ENCODE measurements at regions of chr7 and their contacts with region 1.

Region 1: DNA sequence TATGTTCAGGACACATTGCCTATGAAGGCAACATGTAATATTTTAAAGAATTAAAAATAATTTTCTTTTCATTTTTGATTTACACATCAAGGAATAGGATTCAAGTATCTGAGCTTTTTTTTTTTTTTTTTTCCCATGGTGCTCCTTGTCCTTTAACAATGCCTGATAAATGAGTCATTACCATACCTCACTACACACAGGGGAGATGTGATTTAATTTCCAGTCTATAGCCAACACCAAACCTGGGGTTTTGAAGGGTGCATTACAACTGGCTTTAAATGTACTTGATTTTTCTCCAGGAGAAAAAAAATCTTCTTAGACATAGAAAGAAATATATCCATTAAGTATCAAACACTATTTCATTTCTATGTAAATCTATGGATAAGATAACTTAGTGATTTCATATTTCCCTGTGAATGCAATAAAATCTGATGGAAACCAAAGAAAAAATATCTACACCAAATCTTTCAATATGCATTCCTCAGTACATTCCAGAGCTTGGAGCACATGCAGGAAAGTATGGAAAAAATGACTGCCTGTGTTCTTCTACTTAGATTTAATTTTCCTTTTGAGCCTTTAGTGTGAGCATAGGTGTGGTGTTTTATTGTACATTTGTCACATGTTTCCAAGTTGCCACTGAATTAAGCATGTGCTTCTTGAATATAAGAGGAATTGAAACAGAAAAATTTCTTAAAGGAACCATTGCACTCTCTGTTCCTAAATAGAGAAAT is 204.8 kb upstream of the MEOX2 start:
- DNase-seq: peak; percentile 26
- ATAC-seq: peak; percentile 63
- H3K4me3 ChIP-seq: no peak overlapping the region
- H3K27ac ChIP-seq: no peak overlapping the region
- H3K4me1 ChIP-seq: no peaks in the 10 kb centered on the region
- H3K27me3 ChIP-seq: no peaks in the 10 kb centered on the region
- CTCF ChIP-seq: no peak

Region 2: DNA sequence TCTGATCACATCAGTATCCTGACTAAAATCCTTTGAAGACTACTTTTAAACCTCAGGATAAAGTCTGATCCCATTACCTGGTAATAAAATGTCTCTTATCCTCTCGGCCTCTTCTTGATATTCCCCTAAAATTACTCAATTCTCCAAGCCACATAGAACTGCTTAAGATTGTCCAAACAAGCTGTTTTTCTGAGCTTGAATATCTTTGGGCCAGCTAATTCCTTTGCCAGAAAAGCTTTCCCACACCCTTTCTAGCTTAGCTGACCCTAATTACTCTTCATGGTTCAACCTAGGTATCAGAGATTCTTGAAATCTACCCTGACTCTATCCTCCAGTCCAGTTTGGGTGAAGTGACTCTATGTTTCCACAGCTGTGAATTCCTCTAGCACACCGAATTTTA is 201.4 kb after region 1 on chr7:
- CTCF ChIA-PET with region 1: no interaction called
- POLR2A ChIA-PET with region 1: interaction called, 16 read pairs
- intact Hi-C with region 1: no loop called
- DNase-seq: no peak
- ATAC-seq: no peak
- H3K4me3 ChIP-seq: no peak overlapping the region
- H3K27ac ChIP-seq: no peak overlapping the region
- H3K4me1 ChIP-seq: no peaks in the 10 kb centered on the region
- H3K27me3 ChIP-seq: no peaks in the 10 kb centered on the region
- CTCF ChIP-seq: no peak

Region 3: DNA sequence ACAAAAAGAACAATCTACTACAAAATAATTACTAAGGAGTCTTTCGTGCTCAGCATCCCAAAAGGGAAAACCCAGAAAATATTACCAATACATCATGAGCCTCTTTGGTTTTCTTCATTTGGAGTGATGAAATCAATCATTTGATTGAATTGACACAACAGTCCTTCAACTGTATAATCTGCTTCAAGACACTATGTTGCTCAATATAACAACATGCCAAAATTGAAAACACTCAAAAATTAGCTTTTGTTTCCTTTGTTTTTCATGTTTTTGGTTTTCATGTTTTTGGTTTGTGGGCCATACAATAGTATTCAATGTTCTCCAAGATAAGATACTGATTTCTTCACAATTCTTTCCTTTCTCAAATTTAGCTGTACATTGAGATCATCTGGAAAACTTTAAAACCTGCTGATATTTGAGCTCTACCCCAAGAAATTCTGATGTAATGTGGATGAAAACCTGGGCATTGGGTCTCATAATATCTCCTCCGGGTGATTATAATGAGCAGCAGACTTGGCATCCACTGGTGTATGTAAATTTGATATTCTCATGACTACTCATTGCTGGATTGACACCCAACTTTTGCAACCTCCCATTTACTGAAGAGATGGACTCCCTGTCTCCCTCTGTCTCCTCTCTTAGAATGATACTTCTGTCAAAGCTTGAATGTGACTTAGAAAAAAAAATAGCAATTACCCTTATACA is 569.6 kb after region 1 on chr7:
- CTCF ChIA-PET with region 1: no interaction called
- POLR2A ChIA-PET with region 1: no interaction called
- intact Hi-C with region 1: no loop called
- DNase-seq: no peak
- ATAC-seq: no peak
- H3K4me3 ChIP-seq: no peak overlapping the region
- H3K27ac ChIP-seq: no peak overlapping the region
- H3K4me1 ChIP-seq: no peaks in the 10 kb centered on the region
- H3K27me3 ChIP-seq: no peaks in the 10 kb centered on the region
- CTCF ChIP-seq: no peak

Region 4: GRCh38 chr7:17176371-17177032 is 1285.2 kb after region 1 on chr7:
- CTCF ChIA-PET with region 1: no interaction called
- POLR2A ChIA-PET with region 1: interaction called, 17 read pairs
- intact Hi-C with region 1: no loop called
- DNase-seq: no peak
- ATAC-seq: no peak
- H3K4me3 ChIP-seq: no peak overlapping the region
- H3K27ac ChIP-seq: no peak overlapping the region
- H3K4me1 ChIP-seq: peaks cover 14% of the 10 kb centered on the region; the same call in 1 of the 2 replicates
- H3K27me3 ChIP-seq: no peaks in the 10 kb centered on the region
- CTCF ChIP-seq: no peak

Measured in PC-3 (cell line).